ENCODE measurements at regions of chr1 and their contacts with region 1.

Region 1: GRCh38 chr1:244652699-244653466 is at the start of gene DESI2:
- DNase-seq: peak; percentile 99
- H3K4me3 Mint-ChIP-seq: peak within 1 kb of the TSS; percentile 82
- H3K27ac Mint-ChIP-seq: peak within 1 kb of the TSS; percentile 88
- H3K4me1 Mint-ChIP-seq: peaks cover 18% of the 10 kb centered on the region
- H3K27me3 Mint-ChIP-seq: no peaks in the 10 kb centered on the region
- total RNA-seq, gene DESI2: 31.7 to 32.5 TPM

Region 2: GRCh38 chr1:244461245-244462071 is 191.4 kb before region 1 on chr1 and contains the start of gene CATSPERE:
- CTCF ChIA-PET with region 1: no interaction called
- intact Hi-C with region 1: loop called (anchors 1 kb)
- DNase-seq: peak; percentile 80
- H3K4me3 Mint-ChIP-seq: peak within 1 kb of the TSS; percentile 90
- H3K27ac Mint-ChIP-seq: peak within 1 kb of the TSS; percentile 97
- H3K4me1 Mint-ChIP-seq: peaks cover 12% of the 10 kb centered on the region
- H3K27me3 Mint-ChIP-seq: no peaks in the 10 kb centered on the region
- total RNA-seq, gene CATSPERE: 0.17 TPM

Region 3: DNA sequence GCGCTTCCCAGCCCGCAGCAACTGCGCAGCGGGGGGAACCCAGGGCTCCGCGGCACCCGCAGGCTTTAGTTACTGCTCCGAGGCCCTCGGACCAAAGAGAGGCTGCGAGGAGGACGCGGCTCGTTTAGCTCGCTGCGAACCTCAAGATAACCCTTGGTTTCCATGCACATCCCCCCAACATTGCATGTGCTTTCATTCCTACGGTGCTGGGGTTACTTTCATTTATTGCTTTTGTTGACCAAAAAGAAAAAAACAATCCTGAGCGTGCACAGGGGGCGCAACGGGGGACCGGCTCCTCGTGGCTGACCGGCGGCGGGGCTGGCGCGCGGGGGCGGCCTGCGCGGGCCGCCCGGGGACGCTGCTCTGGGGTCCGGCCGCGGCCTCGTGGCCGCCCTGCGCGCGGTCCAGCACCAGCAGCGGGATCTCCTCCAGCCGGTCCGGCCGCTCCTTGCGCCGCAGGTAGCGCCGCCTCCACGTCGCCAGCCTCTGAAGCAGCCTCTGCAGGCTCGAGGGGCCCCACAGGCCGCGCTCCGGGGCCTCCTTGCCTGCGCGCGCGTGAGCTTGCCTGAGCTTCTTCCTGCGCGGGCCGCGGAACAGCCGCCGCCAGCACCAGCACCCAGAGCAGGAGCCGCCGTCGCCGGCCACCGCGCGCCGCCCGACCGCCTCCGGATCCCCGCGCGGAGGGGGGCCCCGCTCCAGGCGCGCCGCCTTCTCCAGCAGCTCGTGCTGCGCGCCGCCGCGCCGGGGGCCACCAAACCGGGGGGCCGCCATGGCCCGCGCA is 77.5 kb after region 1 on chr1:
- CTCF ChIA-PET with region 1: interaction called, 4 read pairs
- intact Hi-C with region 1: loop called (anchors 1 kb)
- DNase-seq: peak; percentile 36
- H3K4me3 Mint-ChIP-seq: peak overlapping the region; percentile 78
- H3K27ac Mint-ChIP-seq: no peak overlapping the region
- H3K4me1 Mint-ChIP-seq: peaks cover 9% of the 10 kb centered on the region
- H3K27me3 Mint-ChIP-seq: peaks cover 22% of the 10 kb centered on the region

Region 4: DNA sequence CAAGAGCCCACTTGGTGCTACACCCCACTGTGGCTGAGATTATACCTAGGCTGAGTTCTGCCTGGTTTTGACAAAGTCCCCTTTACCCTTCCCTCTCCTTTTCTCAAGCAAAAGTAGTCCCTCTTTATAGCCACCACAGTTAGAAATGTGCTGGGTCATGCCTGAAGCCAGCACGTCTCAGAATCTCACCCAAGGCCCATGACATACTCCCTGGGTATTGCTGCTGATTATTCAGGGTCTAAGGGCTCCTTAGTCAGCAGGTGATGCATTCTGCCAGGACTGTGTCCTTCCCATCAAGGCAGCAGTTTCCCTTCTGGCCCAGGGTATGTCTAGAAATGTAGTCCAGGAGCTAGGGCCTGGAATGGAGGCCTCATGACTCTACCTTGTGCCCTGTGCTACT is 115.3 kb after region 1 on chr1:
- CTCF ChIA-PET with region 1: no interaction called
- intact Hi-C with region 1: no loop called
- DNase-seq: no peak
- H3K4me3 Mint-ChIP-seq: no peak overlapping the region
- H3K27ac Mint-ChIP-seq: peak overlapping the region; percentile 31
- H3K4me1 Mint-ChIP-seq: no peaks in the 10 kb centered on the region
- H3K27me3 Mint-ChIP-seq: peaks cover 3% of the 10 kb centered on the region

Region 5: GRCh38 chr1:244835276-244836134 is 182.6 kb after region 1 on chr1 and contains the start of gene COX20:
- CTCF ChIA-PET with region 1: no interaction called
- intact Hi-C with region 1: loop called (anchors 1 kb)
- DNase-seq: peak; percentile 85
- H3K4me3 Mint-ChIP-seq: peak within 1 kb of the TSS; percentile 94
- H3K27ac Mint-ChIP-seq: peak within 1 kb of the TSS; percentile 99
- H3K4me1 Mint-ChIP-seq: peaks cover 38% of the 10 kb centered on the region
- H3K27me3 Mint-ChIP-seq: no peaks in the 10 kb centered on the region
- total RNA-seq, gene COX20: 21.4 to 24.2 TPM

Measured in activated naive CD4-positive, alpha-beta T cell treated with anti-CD3 and anti-CD28 coated beads for 36 hours (primary cell).